Thyroid gland (tissue), 4 donors: ENCODE measurements at regions of chr7 and their contacts with region 1.

Region 1: DNA sequence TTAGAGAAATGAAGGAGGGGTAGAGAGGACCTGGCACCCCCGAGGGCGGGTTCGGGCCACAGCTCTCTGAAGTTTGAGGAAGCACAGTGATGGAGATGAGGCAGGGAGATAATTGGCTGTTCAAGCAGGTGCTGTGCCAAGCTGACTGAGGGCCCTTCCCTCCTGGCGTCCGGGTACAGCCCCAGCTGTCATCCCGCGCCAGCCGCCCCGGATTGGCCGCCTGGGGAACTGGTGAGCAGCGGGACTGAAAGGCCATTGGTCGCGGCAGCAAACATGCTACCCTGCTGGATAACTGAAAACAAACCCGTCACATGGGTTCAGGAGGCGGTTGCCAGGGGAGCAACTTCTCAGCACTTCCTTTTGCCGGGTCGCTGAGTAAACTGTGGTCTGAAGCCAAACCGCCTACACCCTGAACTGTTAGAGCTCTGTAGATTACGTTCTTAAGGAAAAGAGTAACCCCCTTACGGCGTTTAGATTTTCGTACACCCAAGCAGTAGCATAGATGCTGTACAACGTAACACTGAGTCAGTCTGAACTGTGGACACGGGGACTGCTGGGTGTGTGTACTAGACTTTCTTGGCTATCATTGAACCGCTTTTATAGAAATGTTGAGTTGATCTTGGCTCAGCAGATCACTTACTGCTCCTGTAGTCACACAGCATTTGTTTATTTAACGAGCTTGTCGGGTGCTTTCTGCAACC is 1.3 kb downstream of the INSIG1 start:
- DNase-seq: peak; percentile 94
- H3K4me3 ChIP-seq: peak overlapping the region in 2 of 3 donors; percentile 85 to 90
- H3K27ac ChIP-seq: peak overlapping the region; percentile 76 to 88 (median 83)
- H3K4me1 ChIP-seq: peaks cover 10% of the 10 kb centered on the region in 2 donors
- H3K27me3 ChIP-seq: no peaks in the 10 kb centered on the region
- CTCF ChIP-seq: peak in 1 of 6 experiments; percentile 11
- POLR2A ChIP-seq: peak in 1 of 2 donors; percentile 71

Region 2: GRCh38 chr7:154474903-154475520 is 824.0 kb before region 1 on chr7:
- intact Hi-C with region 1: no loop called
- DNase-seq: no peak
- H3K4me3 ChIP-seq: no peak overlapping the region
- H3K27ac ChIP-seq: no peak overlapping the region
- H3K4me1 ChIP-seq: peaks cover 4 to 7% of the 10 kb centered on the region in 2 donors
- H3K27me3 ChIP-seq: no peaks in the 10 kb centered on the region
- CTCF ChIP-seq: no peak
- POLR2A ChIP-seq: no peak

Region 3: DNA sequence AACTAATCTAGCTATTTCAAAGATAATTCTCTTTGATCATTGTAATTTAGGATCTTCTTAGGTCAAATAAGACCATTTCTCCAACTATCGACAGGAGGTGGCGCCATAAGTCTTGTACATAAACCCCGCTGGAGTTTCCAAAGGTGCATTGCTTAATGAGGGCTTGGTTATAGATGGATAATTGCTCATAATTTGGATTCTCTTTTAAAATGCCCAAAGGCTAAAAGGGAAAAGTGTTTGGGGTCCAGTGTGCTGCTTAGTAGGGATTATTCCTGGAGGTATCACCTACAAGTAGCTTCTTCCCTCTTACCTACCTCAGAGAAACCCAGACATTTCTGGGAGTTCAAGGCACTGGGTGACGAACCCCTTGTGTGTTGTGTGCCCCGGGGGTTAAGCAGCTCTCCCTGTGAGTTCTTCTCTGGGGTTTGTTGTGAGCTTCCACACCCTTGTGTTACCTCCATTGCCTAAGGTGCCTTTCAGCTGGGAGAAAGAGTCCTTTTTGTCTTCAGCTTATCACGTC is 371.3 kb before region 1 on chr7:
- intact Hi-C with region 1: no loop called
- DNase-seq: peak; percentile 85 to 86
- H3K4me3 ChIP-seq: peak overlapping the region in 2 of 3 donors; percentile 23 to 47
- H3K27ac ChIP-seq: peak overlapping the region; percentile 51 to 86 (median 82)
- H3K4me1 ChIP-seq: peaks cover 5 to 7% of the 10 kb centered on the region in 2 donors
- H3K27me3 ChIP-seq: no peaks in the 10 kb centered on the region
- CTCF ChIP-seq: peak; percentile 22 to 78 (median 61)
- POLR2A ChIP-seq: no peak

Region 4: GRCh38 chr7:155003376-155004214 is 295.4 kb before region 1 on chr7:
- intact Hi-C with region 1: no loop called
- DNase-seq: peak; percentile 78 to 81
- H3K4me3 ChIP-seq: peak overlapping the region; percentile 87 to 98 (median 89)
- H3K27ac ChIP-seq: peak overlapping the region; percentile 90 to 96 (median 92)
- H3K4me1 ChIP-seq: peaks cover 3 to 10% of the 10 kb centered on the region in 2 donors
- H3K27me3 ChIP-seq: no peaks in the 10 kb centered on the region
- CTCF ChIP-seq: no peak
- POLR2A ChIP-seq: peak in 1 of 2 donors; percentile 66

Region 5: GRCh38 chr7:155205368-155206317 is 93.3 kb before region 1 on chr7:
- intact Hi-C with region 1: loop called (anchors 5 kb)
- DNase-seq: peak; percentile 53 to 55
- H3K4me3 ChIP-seq: no peak overlapping the region
- H3K27ac ChIP-seq: peak overlapping the region; percentile 71 to 73 (median 71)
- H3K4me1 ChIP-seq: no peaks in the 10 kb centered on the region
- H3K27me3 ChIP-seq: no peaks in the 10 kb centered on the region
- CTCF ChIP-seq: no peak
- POLR2A ChIP-seq: peak in 1 of 2 donors; percentile 37